ENCODE measurements at regions of chr16 and their contacts with region 1.

Region 1: GRCh38 chr16:31265329-31266245 is 5.8 kb downstream of the ITGAM start:
- DNase-seq: peak; percentile 91
- H3K4me3 Mint-ChIP-seq: peak overlapping the region; percentile 33
- H3K27ac Mint-ChIP-seq: peak overlapping the region; percentile 79
- H3K4me1 Mint-ChIP-seq: peaks cover 50% of the 10 kb centered on the region
- H3K27me3 Mint-ChIP-seq: no peaks in the 10 kb centered on the region
- CTCF ChIP-seq: peak; percentile 21

Region 2: GRCh38 chr16:31168848-31169247 is 96.7 kb before region 1 on chr16:
- CTCF ChIA-PET with region 1: no interaction called
- intact Hi-C with region 1: no loop called
- DNase-seq: no peak
- H3K4me3 Mint-ChIP-seq: no peak overlapping the region
- H3K27ac Mint-ChIP-seq: no peak overlapping the region
- H3K4me1 Mint-ChIP-seq: peaks cover 8% of the 10 kb centered on the region
- H3K27me3 Mint-ChIP-seq: no peaks in the 10 kb centered on the region
- CTCF ChIP-seq: no peak

Region 3: GRCh38 chr16:31215287-31216162 is 50.1 kb before region 1 on chr16:
- CTCF ChIA-PET with region 1: no interaction called
- intact Hi-C with region 1: loop called (anchors 5 kb)
- DNase-seq: peak; percentile 66
- H3K4me3 Mint-ChIP-seq: peak overlapping the region; percentile 68
- H3K27ac Mint-ChIP-seq: no peak overlapping the region
- H3K4me1 Mint-ChIP-seq: peaks cover 9% of the 10 kb centered on the region
- H3K27me3 Mint-ChIP-seq: peaks cover 92% of the 10 kb centered on the region
- CTCF ChIP-seq: no peak